Natural killer cell (primary cell): ENCODE measurements at regions of chr6 and their contacts with region 1.

Region 1: GRCh38 chr6:3068329-3069214 is at the start of gene RIPK1:
- DNase-seq: peak; percentile 95 to 96
- ATAC-seq: peak; percentile 78 to 93 (median 83)
- H3K4me3 ChIP-seq: peak within 1 kb of the TSS; percentile 67
- H3K4me3 Mint-ChIP-seq: peak within 1 kb of the TSS; percentile 95
- H3K27ac ChIP-seq: peak within 1 kb of the TSS; percentile 96
- H3K27ac Mint-ChIP-seq: peak within 1 kb of the TSS; percentile 91 to 94
- H3K4me1 ChIP-seq: peaks cover 33% of the 10 kb centered on the region
- H3K4me1 Mint-ChIP-seq: peaks cover 44 to 50% of the 10 kb centered on the region in 2 donors
- H3K27me3 ChIP-seq: no peaks in the 10 kb centered on the region
- H3K27me3 Mint-ChIP-seq: no peaks in the 10 kb centered on the region
- CTCF ChIP-seq: peak; percentile 15
- total RNA-seq, gene RIPK1: 30.9 to 44.8 (median 34.5) TPM

Region 2: DNA sequence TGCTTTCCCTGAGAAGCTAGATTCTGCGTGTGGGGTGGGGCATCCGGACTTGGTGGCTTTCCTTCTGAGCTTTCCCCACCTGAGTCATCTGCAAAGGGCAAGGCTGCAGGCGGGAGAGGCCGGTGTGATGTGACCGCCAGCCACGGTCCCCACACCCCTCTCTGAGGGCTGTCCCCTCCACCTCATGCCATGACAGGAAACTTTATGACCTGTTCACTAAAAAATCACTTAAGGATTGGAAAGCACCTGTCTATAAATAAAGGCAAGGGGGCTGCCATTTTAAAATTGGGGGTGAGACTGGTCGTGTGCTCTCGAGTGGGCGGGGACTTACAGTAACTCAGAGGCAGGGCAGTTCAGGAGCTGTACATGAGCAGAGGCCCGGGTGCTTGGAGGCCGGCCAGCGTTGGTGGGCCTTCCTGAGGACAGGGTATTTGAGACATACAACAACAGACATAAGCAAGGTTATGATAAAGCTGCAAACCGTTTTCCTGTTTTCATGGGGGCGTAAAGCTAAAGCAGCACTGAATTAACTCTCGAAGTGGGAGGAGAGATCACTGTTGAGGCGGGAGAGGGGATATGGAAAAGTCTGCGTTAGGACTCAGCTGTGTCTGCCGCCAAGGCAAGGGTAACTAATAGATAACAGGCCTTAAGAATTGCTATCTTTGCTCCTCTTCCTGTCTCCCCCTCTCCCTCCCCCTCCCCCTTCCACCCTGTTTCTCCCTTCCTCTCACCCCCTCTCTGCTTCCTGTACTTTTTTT is 210.8 kb before region 1 on chr6:
- intact Hi-C with region 1: loop called (anchors 5 kb)
- DNase-seq: peak; percentile 60 to 85
- ATAC-seq: peak; percentile 61 to 65 (median 64)
- H3K4me3 ChIP-seq: no peak overlapping the region
- H3K4me3 Mint-ChIP-seq: peak overlapping the region; percentile 87
- H3K27ac ChIP-seq: peak overlapping the region; percentile 91
- H3K27ac Mint-ChIP-seq: peak overlapping the region; percentile 94 to 97
- H3K4me1 ChIP-seq: peaks cover 81% of the 10 kb centered on the region
- H3K4me1 Mint-ChIP-seq: peaks cover 60 to 73% of the 10 kb centered on the region in 2 donors
- H3K27me3 ChIP-seq: no peaks in the 10 kb centered on the region
- H3K27me3 Mint-ChIP-seq: no peaks in the 10 kb centered on the region
- CTCF ChIP-seq: no peak

Region 3: DNA sequence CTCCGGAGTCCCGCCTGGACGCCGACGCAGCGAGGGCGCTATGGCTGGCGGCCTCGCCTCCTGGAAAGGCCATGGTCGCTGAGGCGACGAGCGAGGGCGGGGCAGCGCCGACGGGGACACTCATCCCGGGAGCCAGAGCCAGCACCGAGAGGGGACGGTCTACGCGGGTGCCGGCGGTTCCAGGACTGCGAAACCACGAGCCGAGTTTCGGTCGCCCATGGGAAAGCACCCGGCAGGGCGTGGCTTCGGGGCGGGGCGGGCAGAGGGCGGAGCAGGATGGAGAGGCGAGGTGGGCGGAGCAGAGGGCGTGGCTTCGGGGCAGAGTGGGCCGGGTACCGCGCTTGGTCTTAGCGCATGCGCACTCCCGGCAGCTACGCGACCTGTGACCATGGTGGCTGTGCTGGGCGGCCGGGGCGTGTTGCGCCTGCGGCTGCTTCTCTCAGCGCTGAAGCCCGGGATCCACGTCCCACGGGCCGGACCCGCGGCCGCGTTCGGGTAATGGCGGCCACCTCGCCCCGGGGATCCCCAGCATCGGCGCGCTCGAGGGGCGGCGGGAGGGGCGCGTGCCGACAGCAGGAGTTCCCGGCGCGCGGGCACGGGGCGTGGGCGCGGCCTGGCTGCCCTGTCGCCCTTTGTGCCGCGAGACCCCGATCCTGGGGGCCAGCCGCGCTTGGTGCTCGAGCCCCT is 49.9 kb after region 1 on chr6 and contains the start of gene BPHL:
- intact Hi-C with region 1: loop called (anchors 1 kb)
- DNase-seq: peak; percentile 99 to 100
- ATAC-seq: peak; percentile 91 to 99 (median 94)
- H3K4me3 ChIP-seq: peak within 1 kb of the TSS; percentile 69
- H3K4me3 Mint-ChIP-seq: peak within 1 kb of the TSS; percentile 92
- H3K27ac ChIP-seq: peak within 1 kb of the TSS; percentile 95
- H3K27ac Mint-ChIP-seq: peak within 1 kb of the TSS; percentile 91 to 97
- H3K4me1 ChIP-seq: peaks cover 7% of the 10 kb centered on the region
- H3K4me1 Mint-ChIP-seq: peaks cover 17 to 18% of the 10 kb centered on the region in 2 donors
- H3K27me3 ChIP-seq: no peaks in the 10 kb centered on the region
- H3K27me3 Mint-ChIP-seq: no peaks in the 10 kb centered on the region
- CTCF ChIP-seq: no peak
- total RNA-seq, gene BPHL: 2.9 to 5.9 (median 5.7) TPM